OCI-LY7 (cell line): ENCODE measurements at regions of chr2 and their contacts with region 1.

Region 1: GRCh38 chr2:46650556-46651001 is 171.2 kb downstream of the TMEM247 start:
- DNase-seq: peak; percentile 88
- H3K4me3 ChIP-seq: no peak overlapping the region
- H3K27ac ChIP-seq: no peak overlapping the region
- H3K4me1 ChIP-seq: no peaks in the 10 kb centered on the region
- CTCF ChIP-seq: peak; percentile 99

Region 2: GRCh38 chr2:46062637-46063412 is 587.8 kb before region 1 on chr2:
- CTCF ChIA-PET with region 1: no interaction called
- POLR2A ChIA-PET with region 1: no interaction called
- intact Hi-C with region 1: loop called (anchors 5 kb)
- DNase-seq: peak; percentile 68
- H3K4me3 ChIP-seq: no peak overlapping the region
- H3K27ac ChIP-seq: no peak overlapping the region
- H3K4me1 ChIP-seq: no peaks in the 10 kb centered on the region
- CTCF ChIP-seq: peak; percentile 89

Region 3: GRCh38 chr2:46887028-46887885 is 236.7 kb after region 1 on chr2:
- CTCF ChIA-PET with region 1: no interaction called
- POLR2A ChIA-PET with region 1: no interaction called
- intact Hi-C with region 1: loop called (anchors 5 kb)
- DNase-seq: no peak
- H3K4me3 ChIP-seq: no peak overlapping the region
- H3K27ac ChIP-seq: no peak overlapping the region
- H3K4me1 ChIP-seq: no peaks in the 10 kb centered on the region
- CTCF ChIP-seq: no peak